ENCODE measurements at regions of chr10 and their contacts with region 1.

Region 1: GRCh38 chr10:28381903-28382347 is 79.1 kb upstream of the MPP7 start:
- DNase-seq: peak; percentile 89
- H3K4me3 Mint-ChIP-seq: no peak overlapping the region
- H3K27ac Mint-ChIP-seq: no peak overlapping the region
- H3K4me1 Mint-ChIP-seq: peaks cover 28% of the 10 kb centered on the region
- H3K27me3 Mint-ChIP-seq: no peaks in the 10 kb centered on the region

Region 2: GRCh38 chr10:28241741-28242399 is 140.1 kb before region 1 on chr10:
- CTCF ChIA-PET with region 1: interaction called, 45 read pairs
- POLR2A ChIA-PET with region 1: no interaction called
- intact Hi-C with region 1: loop called (anchors 2 kb)
- DNase-seq: peak; percentile 37
- H3K4me3 Mint-ChIP-seq: no peak overlapping the region
- H3K27ac Mint-ChIP-seq: no peak overlapping the region
- H3K4me1 Mint-ChIP-seq: peaks cover 20% of the 10 kb centered on the region
- H3K27me3 Mint-ChIP-seq: no peaks in the 10 kb centered on the region

Region 3: GRCh38 chr10:28250782-28251181 is 131.1 kb before region 1 on chr10:
- CTCF ChIA-PET with region 1: interaction called, 153 read pairs
- POLR2A ChIA-PET with region 1: no interaction called
- intact Hi-C with region 1: loop called (anchors 1 kb)
- DNase-seq: no peak
- H3K4me3 Mint-ChIP-seq: no peak overlapping the region
- H3K27ac Mint-ChIP-seq: no peak overlapping the region
- H3K4me1 Mint-ChIP-seq: peaks cover 6% of the 10 kb centered on the region
- H3K27me3 Mint-ChIP-seq: no peaks in the 10 kb centered on the region

Region 4: GRCh38 chr10:28367929-28368484 is 13.9 kb before region 1 on chr10:
- CTCF ChIA-PET with region 1: interaction called, 20 read pairs
- POLR2A ChIA-PET with region 1: interaction called, 5 read pairs
- intact Hi-C with region 1: loop called (anchors 1 kb)
- DNase-seq: peak; percentile 76
- H3K4me3 Mint-ChIP-seq: peak overlapping the region; percentile 45
- H3K27ac Mint-ChIP-seq: peak overlapping the region; percentile 86
- H3K4me1 Mint-ChIP-seq: peaks cover 45% of the 10 kb centered on the region
- H3K27me3 Mint-ChIP-seq: no peaks in the 10 kb centered on the region

Region 5: GRCh38 chr10:28410420-28411135 is 28.7 kb after region 1 on chr10:
- CTCF ChIA-PET with region 1: no interaction called
- POLR2A ChIA-PET with region 1: no interaction called
- intact Hi-C with region 1: no loop called
- DNase-seq: no peak
- H3K4me3 Mint-ChIP-seq: no peak overlapping the region
- H3K27ac Mint-ChIP-seq: no peak overlapping the region
- H3K4me1 Mint-ChIP-seq: peaks cover 10% of the 10 kb centered on the region
- H3K27me3 Mint-ChIP-seq: peaks cover 14% of the 10 kb centered on the region

Region 6: GRCh38 chr10:28644647-28645046 is 262.7 kb after region 1 on chr10:
- CTCF ChIA-PET with region 1: no interaction called
- POLR2A ChIA-PET with region 1: no interaction called
- intact Hi-C with region 1: no loop called
- DNase-seq: no peak
- H3K4me3 Mint-ChIP-seq: no peak overlapping the region
- H3K27ac Mint-ChIP-seq: no peak overlapping the region
- H3K4me1 Mint-ChIP-seq: no peaks in the 10 kb centered on the region
- H3K27me3 Mint-ChIP-seq: peaks cover 6% of the 10 kb centered on the region

Measured in activated CD4-positive, alpha-beta memory T cell treated with anti-CD3 and anti-CD28 coated beads for 36 hours (primary cell).